ENCODE measurements at regions of chr1 and their contacts with region 1.

Region 1: GRCh38 chr1:163528710-163529348 is 207.1 kb downstream of the NUF2 start:
- DNase-seq: peak; percentile 15
- ATAC-seq: peak; percentile 74
- H3K4me3 ChIP-seq: no peak overlapping the region
- H3K27ac ChIP-seq: no peak overlapping the region
- H3K4me1 ChIP-seq: no peaks in the 10 kb centered on the region
- H3K27me3 ChIP-seq: no peaks in the 10 kb centered on the region
- CTCF ChIP-seq: peak; percentile 65
- POLR2A ChIP-seq: no peak
- RAD21 ChIP-seq: peak; percentile 46

Region 2: DNA sequence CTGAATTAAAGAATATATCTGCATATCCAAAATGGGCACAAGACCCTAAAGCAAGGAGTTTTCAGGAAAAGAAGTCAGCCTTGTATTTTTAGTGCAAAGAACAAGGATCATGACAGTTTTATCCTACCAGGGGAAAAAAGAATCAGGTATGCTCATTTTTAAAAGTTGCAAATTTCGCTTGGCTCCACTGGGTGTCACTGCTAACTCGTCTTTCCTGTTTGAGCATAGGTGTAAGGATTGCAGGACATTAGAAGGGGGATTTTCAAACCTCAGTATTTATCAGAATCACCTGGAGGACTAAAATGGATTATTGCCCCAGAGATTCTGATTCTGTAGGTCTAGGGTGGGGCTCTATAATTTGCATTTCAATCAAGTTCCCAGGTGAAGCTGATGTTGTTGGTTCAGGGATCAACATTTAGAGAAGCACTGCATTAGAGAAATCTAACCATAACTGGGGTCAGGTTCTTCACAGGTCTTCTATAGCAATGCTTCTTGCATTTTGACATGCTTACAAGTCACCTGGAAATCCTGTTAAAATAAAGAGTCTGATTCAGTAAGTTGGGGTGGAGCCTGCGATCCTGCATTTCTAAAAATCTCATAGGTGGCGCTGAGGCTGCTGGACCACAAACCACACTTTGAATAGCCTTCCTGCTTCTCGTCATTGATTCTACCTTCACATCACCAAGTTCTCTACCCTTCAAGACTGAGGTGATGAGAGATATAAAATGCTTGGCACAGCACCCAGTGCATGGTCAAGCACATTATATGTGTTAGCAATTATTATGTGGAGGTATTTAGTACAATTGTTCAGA is 167.5 kb before region 1 on chr1:
- CTCF ChIA-PET with region 1: no interaction called
- POLR2A ChIA-PET with region 1: no interaction called
- dilution Hi-C with region 1: no loop called
- in situ Hi-C with region 1: no loop called
- intact Hi-C with region 1: loop called (anchors 2 kb)
- DNase-seq: no peak
- ATAC-seq: peak; percentile 53; the same call in 1 of the 2 replicates
- H3K4me3 ChIP-seq: no peak overlapping the region
- H3K27ac ChIP-seq: no peak overlapping the region
- H3K4me1 ChIP-seq: no peaks in the 10 kb centered on the region
- H3K27me3 ChIP-seq: peaks cover 5% of the 10 kb centered on the region
- CTCF ChIP-seq: peak; percentile 47
- POLR2A ChIP-seq: no peak
- RAD21 ChIP-seq: peak; percentile 54

Region 3: GRCh38 chr1:163410073-163410999 is 118.5 kb before region 1 on chr1:
- CTCF ChIA-PET with region 1: no interaction called
- POLR2A ChIA-PET with region 1: no interaction called
- dilution Hi-C with region 1: no loop called
- in situ Hi-C with region 1: no loop called
- intact Hi-C with region 1: loop called (anchors 1 kb)
- DNase-seq: peak; percentile 56
- ATAC-seq: peak; percentile 81
- H3K4me3 ChIP-seq: no peak overlapping the region
- H3K27ac ChIP-seq: no peak overlapping the region
- H3K4me1 ChIP-seq: no peaks in the 10 kb centered on the region
- H3K27me3 ChIP-seq: peaks cover 5% of the 10 kb centered on the region
- CTCF ChIP-seq: peak; percentile 75
- POLR2A ChIP-seq: no peak
- RAD21 ChIP-seq: peak; percentile 72

Region 4: DNA sequence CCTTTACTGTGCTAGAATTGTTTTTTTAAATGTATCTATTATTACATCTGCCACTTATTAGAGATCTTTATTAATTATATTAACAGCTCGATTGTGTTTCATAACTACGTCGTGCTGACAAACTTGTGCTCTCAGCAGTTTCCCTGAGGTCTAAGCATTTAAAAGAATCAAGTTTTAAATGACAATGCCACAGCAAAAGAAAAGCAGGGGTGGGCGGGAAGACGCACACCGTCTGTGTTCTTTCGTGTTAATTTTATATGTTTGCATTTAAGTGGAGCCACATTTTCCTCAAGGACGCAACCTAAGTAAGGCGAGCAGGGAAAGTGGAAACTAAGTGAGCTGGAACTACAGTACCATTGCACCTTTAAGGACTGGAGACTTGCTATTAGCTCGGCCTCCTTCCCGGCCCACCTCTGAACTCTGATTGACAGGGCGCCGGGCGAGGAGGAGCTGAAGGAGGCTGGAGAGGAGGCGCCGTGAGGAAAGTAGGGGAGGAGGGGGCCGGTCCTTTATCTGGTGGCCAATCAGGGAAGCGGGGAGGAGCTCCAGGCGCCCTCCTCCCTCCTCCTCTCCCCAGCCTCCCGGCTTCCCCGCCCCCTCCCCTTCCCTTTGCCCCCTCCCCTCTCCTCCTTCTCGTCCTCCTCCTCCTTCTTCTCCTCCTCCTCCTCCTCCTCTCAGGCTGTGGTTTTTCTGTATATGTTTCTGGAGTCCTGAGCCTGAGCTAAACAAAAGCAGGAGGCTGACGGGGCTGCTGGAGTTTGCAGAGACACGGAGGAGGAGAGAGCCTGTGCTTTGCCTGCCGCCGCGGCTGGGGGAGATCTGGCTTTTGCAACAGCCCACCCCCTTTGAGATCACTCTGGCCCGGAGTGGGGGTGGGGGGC is 1029.9 kb after region 1 on chr1 and contains the start of gene PBX1:
- CTCF ChIA-PET with region 1: no interaction called
- POLR2A ChIA-PET with region 1: no interaction called
- dilution Hi-C with region 1: no loop called
- in situ Hi-C with region 1: no loop called
- intact Hi-C with region 1: loop called (anchors 10 kb)
- DNase-seq: peak; percentile 98
- ATAC-seq: peak; percentile 98
- H3K4me3 ChIP-seq: peak within 1 kb of the TSS; percentile 75
- H3K27ac ChIP-seq: peak within 1 kb of the TSS; percentile 99
- H3K4me1 ChIP-seq: no peaks in the 10 kb centered on the region
- H3K27me3 ChIP-seq: no peaks in the 10 kb centered on the region
- CTCF ChIP-seq: no peak
- POLR2A ChIP-seq: peak; percentile 88
- RAD21 ChIP-seq: no peak; the same call in 1 of the 2 replicates
- total RNA-seq, gene PBX1: 17.5 and 17.9 TPM in 2 replicates

Region 5: GRCh38 chr1:164617377-164618201 is 1088.8 kb after region 1 on chr1:
- CTCF ChIA-PET with region 1: no interaction called
- POLR2A ChIA-PET with region 1: no interaction called
- dilution Hi-C with region 1: no loop called
- in situ Hi-C with region 1: no loop called
- intact Hi-C with region 1: loop called (anchors 1 kb)
- DNase-seq: peak; percentile 42
- ATAC-seq: peak; percentile 72
- H3K4me3 ChIP-seq: no peak overlapping the region
- H3K27ac ChIP-seq: no peak overlapping the region
- H3K4me1 ChIP-seq: peaks cover 13% of the 10 kb centered on the region; the same call in 1 of the 2 replicates
- H3K27me3 ChIP-seq: no peaks in the 10 kb centered on the region
- CTCF ChIP-seq: peak; percentile 63
- POLR2A ChIP-seq: no peak
- RAD21 ChIP-seq: peak; percentile 86

Region 6: DNA sequence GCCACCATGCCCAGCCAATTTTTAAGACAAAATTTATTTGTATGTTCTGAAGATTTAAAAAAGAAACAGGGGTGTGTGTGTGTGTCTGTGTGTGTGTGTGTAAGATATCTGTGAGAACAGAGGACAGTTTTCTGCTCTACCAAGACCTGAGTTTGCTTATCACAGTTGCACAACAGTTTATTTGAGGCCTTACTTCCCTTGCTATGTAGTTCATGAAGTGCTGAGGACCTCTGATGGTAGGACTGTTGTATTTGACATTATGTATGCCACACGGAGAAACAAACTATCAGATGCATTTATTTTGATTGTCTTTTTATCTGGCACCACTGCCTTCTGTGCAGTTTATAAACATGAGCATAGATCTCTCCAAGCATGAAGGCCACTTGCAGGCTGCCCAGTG is 1385.4 kb after region 1 on chr1:
- CTCF ChIA-PET with region 1: no interaction called
- POLR2A ChIA-PET with region 1: no interaction called
- dilution Hi-C with region 1: no loop called
- in situ Hi-C with region 1: no loop called
- intact Hi-C with region 1: loop called (anchors 2 kb)
- DNase-seq: peak; percentile 57
- ATAC-seq: peak; percentile 75
- H3K4me3 ChIP-seq: no peak overlapping the region
- H3K27ac ChIP-seq: no peak overlapping the region
- H3K4me1 ChIP-seq: no peaks in the 10 kb centered on the region
- H3K27me3 ChIP-seq: peaks cover 2% of the 10 kb centered on the region
- CTCF ChIP-seq: peak; percentile 55
- POLR2A ChIP-seq: no peak
- RAD21 ChIP-seq: peak; percentile 60

Region 7: DNA sequence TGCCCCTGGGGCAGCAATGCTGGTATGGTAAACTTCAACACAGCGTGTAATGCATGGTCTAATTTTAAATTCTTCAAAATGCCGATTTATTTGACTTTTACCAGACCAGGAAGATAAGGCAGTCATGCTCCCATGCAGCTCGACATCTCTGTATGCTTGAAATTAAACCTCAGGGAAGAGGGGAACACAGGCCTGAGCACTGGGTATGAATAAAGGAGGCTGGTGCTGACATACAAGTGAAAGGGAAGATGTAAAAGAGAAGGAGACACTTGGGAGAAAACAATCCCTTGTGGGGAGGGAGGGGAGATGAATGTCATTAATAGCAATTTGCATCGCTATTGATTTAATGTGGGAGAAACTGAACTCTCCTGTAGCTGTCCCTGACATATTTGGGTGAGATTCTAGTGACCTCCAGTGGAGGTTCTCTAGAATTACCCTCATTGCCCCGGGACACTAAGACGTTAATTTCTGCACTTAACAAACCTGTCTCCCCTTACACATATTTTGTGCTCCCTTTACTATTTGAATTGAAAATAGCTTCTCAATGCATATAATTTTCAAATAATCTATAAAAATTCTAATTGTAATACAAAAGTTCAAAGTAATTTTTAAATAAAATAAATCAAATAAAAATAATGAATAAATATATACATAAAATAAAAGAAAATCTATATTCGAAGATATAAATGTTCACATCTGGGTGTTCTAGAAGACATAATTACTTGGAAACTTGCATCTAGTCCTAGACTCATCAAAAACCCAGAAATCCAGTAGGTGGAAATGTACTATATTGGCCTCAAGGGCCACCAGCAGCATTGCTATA is 1544.6 kb after region 1 on chr1:
- CTCF ChIA-PET with region 1: no interaction called
- POLR2A ChIA-PET with region 1: no interaction called
- dilution Hi-C with region 1: no loop called
- in situ Hi-C with region 1: loop called (anchors 25 kb)
- intact Hi-C with region 1: loop called (anchors 1 kb)
- DNase-seq: peak; percentile 56
- ATAC-seq: peak; percentile 96
- H3K4me3 ChIP-seq: no peak overlapping the region
- H3K27ac ChIP-seq: no peak overlapping the region
- H3K4me1 ChIP-seq: no peaks in the 10 kb centered on the region
- H3K27me3 ChIP-seq: no peaks in the 10 kb centered on the region; the same call in 1 of the 2 replicates
- CTCF ChIP-seq: peak; percentile 80
- POLR2A ChIP-seq: no peak
- RAD21 ChIP-seq: peak; percentile 87